Caco-2 (cell line): ENCODE measurements at regions of chr20 and their contacts with region 1.

Region 1: DNA sequence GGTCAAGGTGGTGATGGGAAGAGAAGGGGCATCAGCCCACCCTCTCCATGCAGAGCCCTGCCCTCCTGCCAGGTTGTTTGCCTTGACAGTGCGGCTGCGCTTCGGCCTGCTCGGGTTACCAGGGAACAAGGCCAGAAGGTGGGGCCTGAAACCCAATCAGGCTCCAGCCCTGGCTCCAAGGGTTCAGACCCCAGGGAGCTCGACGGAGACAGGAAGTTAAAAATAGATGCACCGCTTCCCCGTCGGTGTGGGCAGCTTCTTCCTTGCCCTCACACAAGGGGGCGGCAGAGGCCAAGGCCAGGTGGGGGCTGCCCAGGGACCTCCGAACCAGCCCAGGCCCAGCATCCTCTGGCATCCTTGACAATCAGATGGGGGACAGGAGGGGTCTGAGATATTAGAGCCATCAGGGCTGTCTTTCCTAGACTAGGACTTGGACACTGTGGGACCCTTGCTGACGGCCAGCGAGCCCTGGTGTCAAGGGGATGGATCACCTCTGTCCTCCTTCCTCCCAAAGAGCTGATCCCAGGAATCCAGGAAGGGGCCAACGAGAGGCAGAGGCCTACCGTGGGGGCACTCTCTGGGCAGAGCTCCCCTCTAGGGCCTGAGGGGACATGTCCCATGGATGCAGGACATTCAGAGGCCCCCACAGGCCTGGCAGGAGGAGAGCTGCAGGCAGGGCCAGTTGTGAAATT is 65.2 kb downstream of the RIPOR3 start:
- DNase-seq: peak; percentile 85 to 91
- H3K4me3 ChIP-seq: no peak overlapping the region
- H3K4me3 Mint-ChIP-seq: no peak overlapping the region
- H3K27ac Mint-ChIP-seq: peak overlapping the region; percentile 23
- H3K4me1 ChIP-seq: peaks cover 41% of the 10 kb centered on the region
- H3K4me1 Mint-ChIP-seq: peaks cover 12% of the 10 kb centered on the region
- H3K27me3 ChIP-seq: no peaks in the 10 kb centered on the region
- H3K27me3 Mint-ChIP-seq: no peaks in the 10 kb centered on the region
- CTCF ChIP-seq: peak; percentile 96 to 97

Region 2: DNA sequence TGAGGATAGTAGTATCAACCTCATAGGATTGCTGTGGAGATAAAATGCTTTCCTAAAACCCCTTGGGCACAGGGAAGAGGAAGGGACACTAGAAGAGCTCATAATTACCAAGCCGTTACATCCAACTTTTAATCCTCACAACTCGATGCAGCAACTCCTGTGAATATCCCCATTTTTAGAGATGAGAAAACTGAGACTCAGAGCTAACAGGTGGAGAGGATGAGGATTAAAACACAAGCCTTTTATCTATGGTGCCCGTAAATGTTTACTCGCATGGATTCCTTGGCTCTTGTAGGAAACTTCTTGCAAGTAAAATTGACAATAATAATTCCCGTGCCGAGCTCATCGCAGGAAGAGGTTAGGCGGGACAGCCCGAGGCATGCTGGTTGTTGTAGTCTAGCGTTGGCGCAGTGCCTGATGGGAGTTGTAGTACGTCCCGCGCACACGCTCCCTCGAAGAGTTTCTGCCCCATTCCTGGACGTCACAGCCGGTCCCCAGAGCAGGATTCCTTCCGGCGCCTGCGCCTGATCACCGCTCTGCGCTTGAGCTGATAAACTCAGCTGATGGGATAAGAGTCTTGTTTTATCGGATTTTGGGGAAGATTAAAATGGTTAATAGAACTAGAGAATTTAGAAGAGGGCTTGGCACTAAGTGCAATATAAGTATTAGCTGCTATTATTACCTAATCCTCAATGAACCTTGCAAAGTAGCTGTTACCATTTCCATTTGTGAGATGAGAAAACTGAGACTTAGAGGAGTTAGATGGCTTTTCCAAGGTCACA is 510.4 kb before region 1 on chr20:
- CTCF ChIA-PET with region 1: no interaction called
- POLR2A ChIA-PET with region 1: no interaction called
- intact Hi-C with region 1: no loop called
- DNase-seq: peak; percentile 98
- H3K4me3 ChIP-seq: peak overlapping the region; percentile 43
- H3K4me3 Mint-ChIP-seq: peak overlapping the region; percentile 96
- H3K27ac Mint-ChIP-seq: peak overlapping the region; percentile 85
- H3K4me1 ChIP-seq: peaks cover 30% of the 10 kb centered on the region
- H3K4me1 Mint-ChIP-seq: peaks cover 44% of the 10 kb centered on the region
- H3K27me3 ChIP-seq: no peaks in the 10 kb centered on the region
- H3K27me3 Mint-ChIP-seq: no peaks in the 10 kb centered on the region
- CTCF ChIP-seq: no peak

Region 3: DNA sequence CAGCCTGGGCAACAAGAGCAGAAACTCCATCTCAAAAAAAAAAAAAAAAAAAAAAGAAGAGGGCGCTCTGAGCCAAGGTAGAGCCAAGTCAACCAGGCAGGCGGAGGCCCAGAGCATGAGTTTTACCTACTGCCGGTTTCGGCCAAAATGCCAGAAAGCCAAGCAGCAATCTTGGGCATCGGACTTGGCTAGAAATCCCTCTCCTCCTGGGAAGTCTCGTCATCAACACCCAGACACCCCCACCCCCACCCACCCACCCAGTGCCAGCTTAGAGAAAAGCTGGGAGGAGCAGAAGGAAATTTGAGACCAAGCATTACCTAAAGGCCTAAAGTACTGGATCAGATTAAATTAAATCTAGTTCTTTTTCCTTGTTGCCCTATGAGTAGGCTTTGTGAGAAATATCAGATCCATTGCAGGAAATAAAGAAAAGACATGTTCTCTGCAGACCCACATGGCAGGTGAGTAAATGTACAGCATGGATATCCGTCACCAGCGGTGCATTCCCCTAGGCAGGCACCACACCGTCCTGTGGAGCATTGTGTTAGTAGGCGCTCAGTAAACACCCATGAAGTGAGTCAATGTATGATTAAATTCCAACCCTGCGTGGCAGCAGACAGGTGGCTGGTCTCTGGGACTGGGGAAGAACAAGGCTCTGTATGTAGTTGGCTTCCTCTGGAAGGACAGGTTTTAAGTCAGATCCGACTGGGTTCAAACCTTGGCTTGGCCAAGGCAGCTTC is 44.2 kb after region 1 on chr20:
- CTCF ChIA-PET with region 1: interaction called, 16 read pairs
- POLR2A ChIA-PET with region 1: no interaction called
- intact Hi-C with region 1: no loop called
- DNase-seq: peak; percentile 86 to 89
- H3K4me3 ChIP-seq: no peak overlapping the region
- H3K4me3 Mint-ChIP-seq: no peak overlapping the region
- H3K27ac Mint-ChIP-seq: peak overlapping the region; percentile 71
- H3K4me1 ChIP-seq: peaks cover 82% of the 10 kb centered on the region
- H3K4me1 Mint-ChIP-seq: peaks cover 76% of the 10 kb centered on the region
- H3K27me3 ChIP-seq: no peaks in the 10 kb centered on the region
- H3K27me3 Mint-ChIP-seq: no peaks in the 10 kb centered on the region
- CTCF ChIP-seq: no peak

Region 4: DNA sequence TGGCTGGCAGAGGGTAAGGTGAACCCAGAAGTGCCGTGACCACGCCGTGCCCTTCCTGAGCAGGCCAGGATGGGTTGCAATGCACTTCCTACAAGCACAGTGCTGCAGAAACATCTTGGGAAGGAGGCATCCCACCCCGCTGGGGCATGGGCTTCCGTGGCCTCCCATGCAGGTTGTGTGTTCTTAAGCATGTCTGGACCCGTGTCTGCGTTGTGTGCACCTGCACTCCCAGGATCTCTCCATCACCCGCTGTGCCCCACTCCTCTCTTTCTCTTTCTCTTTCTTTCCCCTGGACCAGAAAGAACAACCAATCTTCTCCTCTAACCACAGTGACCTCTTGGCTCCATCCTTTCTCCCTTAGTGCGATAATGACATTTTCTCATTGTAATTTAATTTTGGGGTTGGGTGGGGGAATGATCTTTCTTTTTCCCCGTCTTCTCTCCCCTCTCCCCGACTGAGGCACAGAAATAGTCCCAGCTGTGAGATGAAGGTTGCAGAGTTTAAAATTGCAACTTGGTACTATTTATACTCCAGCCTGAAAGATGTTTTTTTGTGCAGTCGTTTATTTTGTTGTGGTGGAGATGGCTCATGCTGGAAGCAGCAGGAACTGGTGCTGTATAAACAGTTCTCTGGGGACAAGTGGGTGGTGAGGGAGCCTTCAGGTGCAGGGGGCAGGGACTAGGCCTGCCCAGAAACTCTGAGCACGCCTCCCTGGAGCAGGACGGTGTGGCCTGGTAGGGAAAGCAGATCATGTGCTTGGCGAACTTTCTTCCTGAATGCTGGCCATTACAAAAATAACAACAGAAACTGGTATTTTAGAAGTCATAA is 189.2 kb after region 1 on chr20:
- CTCF ChIA-PET with region 1: interaction called, 10 read pairs
- POLR2A ChIA-PET with region 1: no interaction called
- intact Hi-C with region 1: no loop called
- DNase-seq: no peak
- H3K4me3 ChIP-seq: no peak overlapping the region
- H3K4me3 Mint-ChIP-seq: no peak overlapping the region
- H3K27ac Mint-ChIP-seq: no peak overlapping the region
- H3K4me1 ChIP-seq: peaks cover 5% of the 10 kb centered on the region; the same call in 1 of the 2 replicates
- H3K4me1 Mint-ChIP-seq: peaks cover 15% of the 10 kb centered on the region
- H3K27me3 ChIP-seq: no peaks in the 10 kb centered on the region
- H3K27me3 Mint-ChIP-seq: no peaks in the 10 kb centered on the region
- CTCF ChIP-seq: no peak